ENCODE measurements at regions of chr20 and their contacts with region 1.

Region 1: DNA sequence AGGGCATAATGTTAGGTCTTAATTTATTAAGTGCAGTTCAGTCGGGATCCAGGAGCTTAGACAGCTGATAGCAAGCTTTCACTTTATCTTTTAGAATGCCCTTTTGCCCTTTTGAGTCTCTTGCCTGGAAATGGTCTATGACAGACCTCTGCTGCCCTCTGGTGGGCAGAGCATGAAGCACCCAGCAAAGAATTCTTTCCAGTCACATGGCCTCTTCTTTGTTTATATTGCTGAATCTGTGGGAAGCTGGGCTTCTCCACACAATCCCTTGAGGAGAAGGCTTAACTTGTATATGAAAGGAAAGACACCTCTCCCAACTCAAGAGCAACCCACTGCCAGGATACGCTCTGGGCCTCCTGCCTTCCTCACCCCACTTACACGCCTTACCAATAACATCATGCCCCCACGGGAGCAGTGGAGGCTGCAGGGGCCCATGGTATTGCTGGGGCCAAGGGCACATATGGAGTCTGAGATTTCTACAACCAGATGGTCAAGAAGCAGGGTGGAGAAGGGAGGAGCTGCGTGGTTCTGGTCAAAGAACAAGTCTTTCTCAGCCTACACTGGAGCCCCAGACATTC is 20.4 kb downstream of the WFDC3 start:
- DNase-seq: peak; percentile 75 to 82 (median 78)
- ATAC-seq: peak; percentile 96 to 100 (median 98)
- H3K4me3 ChIP-seq: no peak overlapping the region
- H3K27ac ChIP-seq: no peak overlapping the region
- H3K4me1 ChIP-seq: peaks cover 0 to 7% (median 0%) of the 10 kb centered on the region in 4 donors
- H3K27me3 ChIP-seq: no peaks in the 10 kb centered on the region
- CTCF ChIP-seq: peak; percentile 97 to 99 (median 98)
- POLR2A ChIP-seq: no peak

Region 2: DNA sequence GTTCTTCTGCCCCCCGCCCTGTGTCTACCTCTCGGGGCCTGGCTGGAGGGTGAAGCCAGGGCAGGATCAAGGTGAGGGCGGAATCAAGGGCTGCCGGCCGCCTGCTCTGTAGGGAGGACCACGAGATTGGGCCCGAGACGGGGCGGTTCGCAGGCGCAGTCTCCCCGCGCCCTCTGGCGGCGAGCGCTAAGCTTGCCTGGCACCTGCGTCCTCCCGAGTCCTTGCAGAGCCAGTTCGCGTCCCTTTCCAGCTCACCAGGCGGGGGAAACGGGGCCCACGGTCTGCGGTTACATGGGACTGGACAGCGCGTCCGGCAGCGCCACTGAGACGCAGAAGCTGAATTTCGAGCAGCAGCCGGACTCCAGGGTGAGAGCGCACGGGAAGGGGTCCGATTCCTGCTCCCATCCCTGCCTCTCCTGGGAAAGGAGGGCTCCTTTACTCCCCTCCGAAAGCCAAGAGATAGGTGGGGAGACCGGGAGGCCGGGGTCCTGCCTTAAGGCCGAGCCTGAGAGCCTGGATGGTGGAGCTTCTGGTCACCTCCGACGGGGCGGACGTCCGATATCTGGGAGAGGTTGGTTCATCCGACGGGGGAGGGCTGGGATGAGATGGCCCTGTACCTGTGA is 459.6 kb before region 1 on chr20:
- intact Hi-C with region 1: loop called (anchors 10 kb)
- DNase-seq: peak; percentile 66 to 72 (median 72)
- ATAC-seq: peak; percentile 79 to 92 (median 88)
- H3K4me3 ChIP-seq: no peak overlapping the region
- H3K27ac ChIP-seq: no peak overlapping the region
- H3K4me1 ChIP-seq: peaks cover 0 to 3% (median 0%) of the 10 kb centered on the region in 4 donors
- H3K27me3 ChIP-seq: peaks cover 0 to under 1% of the 10 kb centered on the region in 2 donors
- CTCF ChIP-seq: peak; percentile 60 to 79 (median 77)
- POLR2A ChIP-seq: no peak

Region 3: DNA sequence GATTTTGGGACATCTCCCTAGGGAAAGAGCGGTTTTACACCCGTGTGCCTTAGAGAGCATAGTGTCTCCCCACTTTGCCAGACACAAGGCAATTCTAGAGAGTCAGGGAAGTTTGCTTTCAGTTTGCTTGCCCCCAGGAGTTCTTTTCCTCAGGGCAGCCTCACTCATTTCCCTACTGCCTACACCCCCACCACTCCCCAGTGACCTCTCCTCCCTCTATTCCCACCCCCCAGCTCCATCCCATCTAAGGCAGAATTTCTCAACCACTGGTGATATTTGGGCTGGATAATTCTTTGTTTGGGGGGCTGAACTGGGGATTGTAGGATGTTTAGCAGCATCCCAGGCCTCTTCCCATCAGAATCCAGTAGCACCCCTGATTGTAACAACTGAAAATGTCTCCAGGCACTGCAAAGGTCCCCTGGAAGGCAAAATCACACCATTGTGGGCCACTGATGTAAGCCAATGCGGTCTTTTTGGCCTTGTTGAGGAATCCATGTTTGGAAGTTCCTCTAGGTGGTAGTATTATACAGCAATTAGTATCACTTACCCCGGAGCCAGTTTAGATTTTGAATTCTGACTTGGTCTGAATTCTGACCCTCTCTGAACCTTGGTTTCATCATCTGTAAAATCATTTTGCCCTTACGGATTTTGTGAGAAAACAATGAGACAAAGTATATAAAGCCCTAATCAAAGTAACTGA is 225.4 kb before region 1 on chr20:
- intact Hi-C with region 1: loop called in 1 of 2 experiments (anchors 10 kb)
- DNase-seq: no peak
- ATAC-seq: peak in 2 of 4 donors; percentile 32 to 41
- H3K4me3 ChIP-seq: no peak overlapping the region
- H3K27ac ChIP-seq: no peak overlapping the region
- H3K4me1 ChIP-seq: no peaks in the 10 kb centered on the region
- H3K27me3 ChIP-seq: no peaks in the 10 kb centered on the region
- CTCF ChIP-seq: peak in 3 of 4 donors; percentile 13 to 30 (median 26)
- POLR2A ChIP-seq: no peak

Region 4: GRCh38 chr20:45592574-45593189 is 178.6 kb before region 1 on chr20:
- intact Hi-C with region 1: loop called in 1 of 2 experiments (anchors 10 kb)
- DNase-seq: no peak
- ATAC-seq: peak; percentile 77 to 89 (median 79)
- H3K4me3 ChIP-seq: no peak overlapping the region
- H3K27ac ChIP-seq: no peak overlapping the region
- H3K4me1 ChIP-seq: no peaks in the 10 kb centered on the region
- H3K27me3 ChIP-seq: no peaks in the 10 kb centered on the region
- CTCF ChIP-seq: peak; percentile 67 to 79 (median 72)
- POLR2A ChIP-seq: no peak

Region 5: GRCh38 chr20:45629496-45630100 is 141.7 kb before region 1 on chr20 and contains the start of gene WFDC10A:
- intact Hi-C with region 1: no loop called
- DNase-seq: no peak
- ATAC-seq: peak; percentile 65 to 78 (median 68)
- H3K4me3 ChIP-seq: no peak within 1 kb of the TSS
- H3K27ac ChIP-seq: no peak within 1 kb of the TSS
- H3K4me1 ChIP-seq: no peaks in the 10 kb centered on the region
- H3K27me3 ChIP-seq: no peaks in the 10 kb centered on the region
- CTCF ChIP-seq: peak; percentile 10 to 62 (median 52)
- POLR2A ChIP-seq: no peak
- total RNA-seq, gene WFDC10A: not detected

Measured in right lobe of liver (tissue), 6 donors.